ENCODE measurements at regions of chr3 and their contacts with region 1.

Region 1: DNA sequence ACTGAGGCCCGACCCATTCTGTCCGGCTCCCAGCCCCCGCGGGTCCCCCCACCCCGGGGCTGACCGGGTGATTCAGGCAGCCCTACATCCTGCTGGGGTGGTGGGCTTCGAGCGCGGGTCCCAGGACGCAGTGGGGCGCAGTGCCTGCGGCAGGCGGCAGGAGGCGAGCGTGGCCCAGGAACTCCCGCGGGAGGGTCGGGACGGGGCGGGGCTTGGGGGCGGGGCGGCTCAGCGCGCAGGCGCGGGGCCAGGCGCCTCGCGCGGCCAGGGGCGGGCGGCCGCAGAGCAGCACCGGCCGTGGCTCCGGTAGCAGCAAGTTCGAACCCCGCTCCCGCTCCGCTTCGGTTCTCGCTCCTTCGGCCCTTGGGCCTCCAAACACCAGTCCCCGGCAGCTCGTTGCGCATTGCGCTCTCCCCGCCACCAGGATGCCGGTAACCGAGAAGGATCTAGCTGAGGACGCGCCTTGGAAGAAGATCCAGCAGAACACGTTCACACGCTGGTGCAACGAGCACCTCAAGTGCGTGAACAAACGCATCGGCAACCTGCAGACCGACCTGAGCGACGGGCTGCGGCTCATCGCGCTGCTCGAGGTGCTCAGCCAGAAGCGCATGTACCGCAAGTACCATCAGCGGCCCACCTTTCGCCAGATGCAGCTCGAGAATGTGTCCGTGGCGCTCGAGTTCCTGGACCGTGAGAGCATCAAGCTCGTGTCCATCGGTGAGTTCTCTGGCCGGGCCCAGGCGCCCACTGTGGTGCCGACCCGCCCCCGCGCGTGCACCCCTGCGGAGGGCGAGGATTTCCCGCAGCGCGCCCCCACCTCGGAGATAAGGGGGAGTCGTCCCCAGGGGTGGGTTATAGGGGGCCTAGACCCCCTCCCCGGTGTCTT is at the start of gene FLNB:
- DNase-seq: peak; percentile 80 to 81 (median 80)
- ATAC-seq: peak; percentile 79 to 87 (median 82)
- H3K4me3 ChIP-seq: peak within 1 kb of the TSS; percentile 85 to 97 (median 92)
- H3K27ac ChIP-seq: peak within 1 kb of the TSS; percentile 83 to 94 (median 90)
- H3K4me1 ChIP-seq: peaks cover 0 to 28% (median 12%) of the 10 kb centered on the region in 4 donors
- H3K27me3 ChIP-seq: no peaks in the 10 kb centered on the region
- CTCF ChIP-seq: peak; percentile 57 to 79 (median 66)
- POLR2A ChIP-seq: peak; percentile 89
- total RNA-seq, gene FLNB: 48.4 to 109 (median 97.8) TPM

Region 2: DNA sequence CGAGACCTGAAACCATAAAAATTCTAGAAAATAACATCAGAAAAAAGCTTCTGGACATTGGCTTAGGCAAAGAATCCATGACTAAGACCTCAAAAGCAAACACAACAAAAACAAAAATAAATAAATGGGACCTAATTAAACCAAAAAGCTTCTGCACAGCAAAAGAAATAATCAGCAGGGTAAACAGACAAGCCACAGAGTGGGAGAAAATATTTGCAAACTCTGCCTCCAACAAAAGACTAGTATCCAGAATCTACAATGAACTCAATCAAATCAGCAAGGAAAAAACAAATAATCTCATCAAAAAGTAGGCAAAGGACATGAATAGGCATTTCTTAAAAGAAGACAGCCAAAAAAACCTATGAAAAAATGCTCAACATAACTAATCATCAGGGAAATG is 523.8 kb before region 1 on chr3:
- intact Hi-C with region 1: no loop called
- DNase-seq: no peak
- ATAC-seq: no peak
- H3K4me3 ChIP-seq: no peak overlapping the region
- H3K27ac ChIP-seq: no peak overlapping the region
- H3K4me1 ChIP-seq: no peaks in the 10 kb centered on the region
- H3K27me3 ChIP-seq: no peaks in the 10 kb centered on the region
- CTCF ChIP-seq: no peak
- POLR2A ChIP-seq: no peak

Region 3: GRCh38 chr3:57803647-57804081 is 204.7 kb before region 1 on chr3:
- intact Hi-C with region 1: no loop called
- DNase-seq: no peak
- ATAC-seq: peak; percentile 42 to 89 (median 53)
- H3K4me3 ChIP-seq: no peak overlapping the region
- H3K27ac ChIP-seq: no peak overlapping the region
- H3K4me1 ChIP-seq: peaks cover 0 to 42% (median 4%) of the 10 kb centered on the region in 4 donors
- H3K27me3 ChIP-seq: no peaks in the 10 kb centered on the region
- CTCF ChIP-seq: no peak
- POLR2A ChIP-seq: no peak

Region 4: DNA sequence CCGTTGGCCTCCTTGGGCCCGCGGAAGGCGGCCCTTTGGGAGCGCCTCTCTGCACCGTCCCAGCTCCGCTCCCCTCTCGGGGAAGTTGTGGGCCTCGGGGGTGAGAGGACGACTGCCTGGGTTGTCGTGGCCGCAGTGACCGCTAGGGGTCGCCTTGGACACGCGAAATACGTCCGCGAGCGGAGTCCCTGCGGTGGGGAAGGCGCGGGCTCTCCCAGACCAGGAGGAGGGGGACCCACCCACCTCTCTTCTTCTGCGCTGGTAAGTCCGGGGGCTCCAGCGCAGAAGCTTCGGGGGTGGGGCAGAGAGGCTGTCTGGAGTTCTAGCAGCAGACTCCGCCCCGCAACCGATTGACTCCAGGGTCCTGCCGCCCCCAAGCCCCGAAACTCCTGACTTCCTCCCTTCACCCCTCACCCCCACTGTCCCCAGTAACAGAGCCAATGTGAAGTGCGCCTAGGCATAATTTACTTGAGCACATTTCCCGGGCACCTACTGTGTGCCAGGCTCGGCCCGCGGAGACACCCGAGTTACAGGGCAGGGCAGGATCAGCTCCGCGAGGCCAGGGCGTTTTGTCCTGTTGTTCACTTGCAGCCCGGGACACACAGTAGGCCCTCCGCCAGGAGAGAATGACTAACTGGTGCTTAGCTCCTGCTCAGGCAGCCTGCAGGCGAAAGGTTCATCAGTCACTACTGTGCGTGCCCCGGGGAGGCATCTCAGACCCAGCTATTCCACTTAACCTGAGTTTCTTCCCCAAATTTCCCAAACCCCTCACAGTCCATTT is 169.6 kb after region 1 on chr3:
- intact Hi-C with region 1: loop called (anchors 10 kb)
- DNase-seq: peak; percentile 93 to 94 (median 93)
- ATAC-seq: peak; percentile 66 to 78 (median 70)
- H3K4me3 ChIP-seq: peak overlapping the region; percentile 26 to 49 (median 32)
- H3K27ac ChIP-seq: peak overlapping the region in 1 of 3 donors; percentile 90
- H3K4me1 ChIP-seq: peaks cover 3 to 68% (median 26%) of the 10 kb centered on the region in 4 donors
- H3K27me3 ChIP-seq: no peaks in the 10 kb centered on the region
- CTCF ChIP-seq: peak; percentile 93 to 97 (median 94)
- POLR2A ChIP-seq: no peak

Region 5: GRCh38 chr3:58305882-58306711 is 297.7 kb after region 1 on chr3 and contains the starts of genes HTD2 and RPP14:
- intact Hi-C with region 1: loop called in 1 of 2 experiments (anchors 10 kb)
- DNase-seq: peak; percentile 98 to 99 (median 98)
- ATAC-seq: peak; percentile 90 to 95 (median 94)
- H3K4me3 ChIP-seq: peak within 1 kb of the TSS; percentile 57 to 96 (median 68)
- H3K27ac ChIP-seq: peak within 1 kb of the TSS; percentile 96 to 98 (median 97)
- H3K4me1 ChIP-seq: peaks cover 0 to 21% (median 12%) of the 10 kb centered on the region in 4 donors
- H3K27me3 ChIP-seq: no peaks in the 10 kb centered on the region
- CTCF ChIP-seq: peak; percentile 96 to 99 (median 98)
- POLR2A ChIP-seq: peak; percentile 83
- total RNA-seq, gene HTD2: 6.1 to 9.9 (median 8.5) TPM
- total RNA-seq, gene RPP14: 7.9 to 12.6 (median 10.6) TPM

Measured in right lobe of liver (tissue), 6 donors.